MCF 10A (cell line): ENCODE measurements at regions of chr15 and their contacts with region 1.

Region 1: GRCh38 chr15:86743283-86743903 is 663.7 kb downstream of the AGBL1 start:
- DNase-seq: peak; percentile 55
- H3K4me3 Mint-ChIP-seq: no peak overlapping the region
- H3K27ac Mint-ChIP-seq: no peak overlapping the region
- H3K4me1 Mint-ChIP-seq: no peaks in the 10 kb centered on the region
- H3K27me3 Mint-ChIP-seq: no peaks in the 10 kb centered on the region
- CTCF ChIP-seq: peak; percentile 90

Region 2: GRCh38 chr15:85412956-85413854 is 1330.2 kb before region 1 on chr15:
- CTCF ChIA-PET with region 1: no interaction called
- POLR2A ChIA-PET with region 1: no interaction called
- intact Hi-C with region 1: no loop called
- DNase-seq: peak; percentile 97
- H3K4me3 Mint-ChIP-seq: peak overlapping the region; percentile 60
- H3K27ac Mint-ChIP-seq: peak overlapping the region; percentile 94
- H3K4me1 Mint-ChIP-seq: peaks cover 57% of the 10 kb centered on the region
- H3K27me3 Mint-ChIP-seq: no peaks in the 10 kb centered on the region
- CTCF ChIP-seq: no peak

Region 3: DNA sequence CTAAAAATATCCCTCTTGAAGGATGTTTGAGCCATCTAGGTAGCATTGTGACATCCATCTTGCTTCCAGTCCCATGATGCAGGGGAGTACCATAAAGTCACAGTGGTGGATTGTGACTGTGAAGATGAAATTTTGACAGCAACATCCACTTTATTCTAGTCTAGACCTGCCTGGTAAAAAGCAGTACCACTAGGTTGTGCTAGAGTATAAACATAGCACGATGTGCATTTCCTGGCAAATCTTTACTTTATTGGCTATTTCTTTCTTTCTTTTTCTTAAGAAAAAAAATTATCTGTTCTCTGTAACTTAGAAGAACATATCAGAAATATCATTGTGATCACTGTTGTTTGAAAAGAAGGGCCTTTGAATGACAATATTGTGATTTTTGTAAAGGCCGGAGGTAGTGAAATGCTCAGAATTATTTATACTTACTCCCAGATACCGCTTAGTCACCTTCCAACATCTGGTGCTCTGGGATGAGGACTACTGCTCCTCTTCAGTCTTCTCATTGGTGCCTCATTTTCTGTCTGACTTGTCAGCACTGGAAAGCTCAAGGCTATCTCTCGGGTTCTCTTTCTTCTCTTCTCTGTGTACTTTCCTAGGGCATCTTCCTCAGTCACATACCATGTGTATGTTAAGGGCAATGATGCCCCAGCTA is 628.1 kb before region 1 on chr15:
- CTCF ChIA-PET with region 1: no interaction called
- POLR2A ChIA-PET with region 1: no interaction called
- intact Hi-C with region 1: loop called (anchors 5 kb)
- DNase-seq: peak; percentile 3
- H3K4me3 Mint-ChIP-seq: no peak overlapping the region
- H3K27ac Mint-ChIP-seq: no peak overlapping the region
- H3K4me1 Mint-ChIP-seq: no peaks in the 10 kb centered on the region
- H3K27me3 Mint-ChIP-seq: peaks cover 65% of the 10 kb centered on the region
- CTCF ChIP-seq: no peak